ENCODE measurements at regions of chr1 and their contacts with region 1.

Region 1: GRCh38 chr1:226424228-226425003 is 16.5 kb upstream of the PARP1 start:
- DNase-seq: peak; percentile 71
- ATAC-seq: peak; percentile 95
- H3K4me3 ChIP-seq: no peak overlapping the region
- H3K27ac ChIP-seq: no peak overlapping the region
- H3K4me1 ChIP-seq: peaks cover 5% of the 10 kb centered on the region; the same call in 1 of the 2 replicates
- H3K27me3 ChIP-seq: 0 out of 2 replicates have a peak, but pooled peaks cover 3% of the 10 kb centered on the region
- CTCF ChIP-seq: peak; percentile 98

Region 2: GRCh38 chr1:226362361-226362760 is 62.1 kb before region 1 on chr1:
- CTCF ChIA-PET with region 1: interaction called, 10 read pairs
- POLR2A ChIA-PET with region 1: no interaction called
- intact Hi-C with region 1: no loop called
- DNase-seq: no peak
- ATAC-seq: no peak
- H3K4me3 ChIP-seq: no peak overlapping the region
- H3K27ac ChIP-seq: no peak overlapping the region
- H3K4me1 ChIP-seq: 0 out of 2 replicates have a peak, but pooled peaks cover 4% of the 10 kb centered on the region
- H3K27me3 ChIP-seq: no peaks in the 10 kb centered on the region
- CTCF ChIP-seq: no peak

Region 3: DNA sequence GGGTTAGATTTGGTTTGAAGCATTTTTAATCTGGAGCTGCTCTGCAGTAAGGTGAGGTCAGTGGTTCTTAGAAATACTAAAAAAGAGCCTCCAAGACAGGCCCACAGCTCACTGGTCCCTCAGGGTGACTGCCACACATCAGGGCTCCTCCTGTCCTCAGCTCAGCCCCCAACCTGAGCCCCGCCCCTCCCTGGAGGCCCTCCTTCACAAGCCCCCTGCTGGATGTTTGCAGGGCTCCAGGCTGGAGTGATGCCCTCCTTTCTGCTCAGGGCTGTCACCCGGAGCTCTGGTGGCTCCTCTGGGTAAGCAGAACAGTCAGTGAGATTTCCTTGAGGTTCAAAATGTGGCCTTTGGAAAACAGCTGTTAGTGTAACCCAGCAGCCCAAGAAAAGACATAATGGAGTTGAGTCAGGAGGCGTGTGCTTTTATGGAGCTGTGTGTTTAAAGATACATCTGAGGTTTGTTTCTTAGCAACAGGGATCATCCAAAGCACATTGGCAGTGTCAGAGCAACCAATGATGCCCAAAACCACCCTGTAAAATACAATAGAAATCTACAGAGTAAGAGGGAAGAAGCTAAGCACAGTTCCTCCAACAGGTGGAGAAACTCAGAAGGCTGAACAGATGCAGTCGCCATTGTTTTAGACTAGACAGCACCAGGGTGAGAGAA is 145.6 kb after region 1 on chr1:
- CTCF ChIA-PET with region 1: no interaction called
- POLR2A ChIA-PET with region 1: no interaction called
- intact Hi-C with region 1: loop called (anchors 5 kb)
- DNase-seq: peak; percentile 53
- ATAC-seq: peak; percentile 71
- H3K4me3 ChIP-seq: no peak overlapping the region
- H3K27ac ChIP-seq: no peak overlapping the region
- H3K4me1 ChIP-seq: no peaks in the 10 kb centered on the region
- H3K27me3 ChIP-seq: peaks cover 30% of the 10 kb centered on the region
- CTCF ChIP-seq: peak; percentile 61

Region 4: DNA sequence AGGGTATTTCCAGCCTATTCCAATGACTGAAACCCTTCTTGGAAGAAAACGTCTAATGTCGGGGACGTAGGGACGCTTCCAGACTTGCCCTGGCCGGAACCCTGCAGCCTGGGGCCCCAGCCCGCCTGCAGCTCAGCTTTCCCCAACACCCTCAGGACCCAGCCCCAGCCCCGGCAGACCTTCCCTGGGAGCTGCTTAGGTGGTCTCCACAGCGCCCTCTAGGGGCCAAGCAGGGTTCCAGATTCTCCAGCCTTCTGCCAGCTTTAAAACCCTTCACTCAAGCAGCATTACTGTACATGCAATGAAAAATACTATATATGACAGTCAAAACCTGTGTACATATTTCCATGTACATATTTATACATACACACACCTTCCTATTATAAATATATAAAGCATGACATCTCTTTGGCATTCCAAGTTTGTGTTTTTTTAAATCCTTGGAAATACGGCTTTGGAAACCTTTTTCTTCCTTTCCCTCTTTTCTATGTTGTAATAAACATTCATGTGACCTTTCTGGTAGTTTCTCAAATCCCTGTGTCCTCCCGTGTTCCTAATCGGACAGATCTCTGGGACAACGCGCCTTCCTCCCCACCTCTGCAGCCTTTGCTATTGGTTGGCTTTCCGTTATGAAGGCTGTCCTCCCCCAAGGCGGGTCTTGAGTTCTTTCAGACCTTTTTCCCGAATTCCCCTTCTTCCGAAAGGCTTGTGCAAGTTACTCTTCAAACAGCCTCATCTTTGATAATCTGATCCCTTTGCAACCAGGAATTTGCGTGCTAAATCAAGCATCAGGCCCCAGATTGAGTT is 184.5 kb after region 1 on chr1:
- CTCF ChIA-PET with region 1: interaction called, 4 read pairs
- POLR2A ChIA-PET with region 1: no interaction called
- intact Hi-C with region 1: loop called (anchors 1 kb)
- DNase-seq: peak; percentile 86
- ATAC-seq: peak; percentile 83
- H3K4me3 ChIP-seq: no peak overlapping the region
- H3K27ac ChIP-seq: no peak overlapping the region
- H3K4me1 ChIP-seq: no peaks in the 10 kb centered on the region
- H3K27me3 ChIP-seq: no peaks in the 10 kb centered on the region
- CTCF ChIP-seq: peak; percentile 99